Motor neuron (in vitro differentiated cells): ENCODE measurements at regions of chr9 and their contacts with region 1.

Region 1: DNA sequence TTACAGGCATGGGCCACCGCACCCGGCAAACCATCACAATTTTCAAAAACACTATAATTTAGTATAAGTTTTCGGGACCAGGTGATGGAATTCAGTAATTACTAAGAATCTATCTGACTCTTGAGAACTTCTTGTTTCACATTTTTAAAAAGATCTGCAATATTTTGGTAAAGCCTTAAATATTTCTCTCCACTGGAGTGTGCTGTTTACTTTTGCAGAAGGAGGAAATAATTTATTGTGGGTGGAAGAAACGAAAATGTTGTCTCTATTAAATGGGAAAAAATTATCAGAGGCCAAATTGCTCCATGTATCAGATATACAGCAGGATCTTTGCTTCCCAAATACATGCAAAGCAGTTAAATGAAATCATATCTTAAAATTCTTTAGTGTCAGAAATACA is 566.8 kb upstream of the CYLC2 start:
- ATAC-seq: no peak
- H3K4me3 ChIP-seq: no peak overlapping the region
- H3K27ac ChIP-seq: no peak overlapping the region
- H3K4me1 ChIP-seq: no peaks in the 10 kb centered on the region

Region 2: GRCh38 chr9:101635473-101635872 is 792.8 kb before region 1 on chr9:
- in situ Hi-C with region 1: no loop called
- ATAC-seq: no peak
- H3K4me3 ChIP-seq: no peak overlapping the region
- H3K27ac ChIP-seq: no peak overlapping the region
- H3K4me1 ChIP-seq: peaks cover 0 to 9% of the 10 kb centered on the region in 2 donors

Region 3: DNA sequence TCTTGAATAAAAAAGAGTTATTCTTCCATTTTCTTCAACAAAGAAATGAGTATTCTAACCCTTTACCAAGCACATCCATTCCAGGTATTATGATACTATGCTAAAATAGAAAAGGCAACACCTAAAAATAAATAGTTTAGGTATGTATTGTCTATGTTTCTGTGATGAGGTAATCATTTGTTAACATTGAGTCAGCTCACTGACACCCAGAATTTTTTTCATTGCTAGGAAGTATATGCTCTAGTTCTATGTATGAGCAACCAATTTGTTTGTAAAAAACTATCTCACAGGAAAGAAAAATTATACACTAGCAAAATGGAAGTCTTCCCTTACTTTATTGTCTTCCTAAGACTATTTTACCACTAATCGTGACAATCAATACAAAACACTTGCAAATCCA is 74.3 kb before region 1 on chr9:
- in situ Hi-C with region 1: loop called in 1 of 9 experiments (anchors 25 kb)
- ATAC-seq: no peak
- H3K4me3 ChIP-seq: no peak overlapping the region
- H3K27ac ChIP-seq: no peak overlapping the region
- H3K4me1 ChIP-seq: no peaks in the 10 kb centered on the region